Right cardiac atrium (tissue), 5 donors: ENCODE measurements at regions of chr11 and their contacts with region 1.

Region 1: DNA sequence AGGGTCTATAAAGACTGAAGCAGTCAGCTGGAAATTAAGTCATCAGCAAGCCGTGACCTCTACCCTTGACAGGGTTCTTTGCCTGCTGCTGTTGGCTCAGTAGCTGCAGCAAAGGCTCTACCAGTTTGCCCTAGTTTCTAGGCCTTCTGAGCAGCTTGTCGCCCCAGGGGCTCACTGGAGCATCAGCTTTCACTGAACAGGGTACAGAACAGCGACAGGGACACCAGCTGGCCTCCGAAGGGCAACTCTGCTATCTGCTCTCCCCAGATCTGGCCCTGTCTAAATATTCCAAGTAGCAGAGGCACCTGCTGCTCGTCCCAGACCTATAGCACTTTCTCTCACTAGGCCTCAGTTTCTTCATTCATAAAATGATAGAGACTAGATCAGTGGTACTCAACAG is 42.4 kb downstream of the SMCO4 start:
- DNase-seq: no peak
- ATAC-seq: peak in 1 of 2 donors; percentile 13
- H3K4me3 ChIP-seq: no peak overlapping the region
- H3K27ac ChIP-seq: no peak overlapping the region
- H3K4me1 ChIP-seq: peaks cover 2% of the 10 kb centered on the region
- H3K27me3 ChIP-seq: no peaks in the 10 kb centered on the region

Region 2: DNA sequence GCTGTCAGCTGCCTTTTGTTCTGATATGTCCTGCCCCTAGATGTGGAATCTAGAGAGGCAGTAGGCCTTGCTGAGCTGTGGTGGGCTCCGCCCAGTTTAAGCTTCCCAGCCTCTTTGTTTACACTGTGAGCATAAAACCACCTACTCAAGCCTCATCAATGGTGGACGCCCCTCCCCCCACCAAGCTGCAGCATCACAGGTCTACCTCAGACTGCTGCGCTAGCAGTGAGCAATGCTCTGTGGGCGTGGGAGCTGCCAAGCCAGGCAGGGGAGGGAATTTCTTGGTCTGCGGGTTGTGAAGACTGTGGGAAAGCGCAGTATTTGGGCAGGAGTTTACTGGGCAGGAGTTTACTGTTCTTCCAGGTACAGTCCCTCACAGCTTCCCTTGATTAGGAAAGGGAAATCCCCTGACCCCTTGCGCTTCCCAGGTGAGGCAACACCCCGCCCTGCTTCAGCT is 56.1 kb before region 1 on chr11:
- intact Hi-C with region 1: loop called in 1 of 4 experiments (anchors 10 kb)
- DNase-seq: no peak
- ATAC-seq: no peak
- H3K4me3 ChIP-seq: no peak overlapping the region
- H3K27ac ChIP-seq: no peak overlapping the region
- H3K4me1 ChIP-seq: no peaks in the 10 kb centered on the region
- H3K27me3 ChIP-seq: no peaks in the 10 kb centered on the region